Activated CD4-positive, alpha-beta memory T cell treated with anti-CD3 and anti-CD28 coated beads for 36 hours (primary cell): ENCODE measurements at regions of chr12 and their contacts with region 1.

Region 1: GRCh38 chr12:68497702-68498101 is 113.0 kb upstream of the RAP1B start:
- DNase-seq: peak; percentile 24
- H3K4me3 Mint-ChIP-seq: peak overlapping the region; percentile 57
- H3K27ac Mint-ChIP-seq: peak overlapping the region; percentile 92
- H3K4me1 Mint-ChIP-seq: peaks cover 29% of the 10 kb centered on the region
- H3K27me3 Mint-ChIP-seq: no peaks in the 10 kb centered on the region

Region 2: DNA sequence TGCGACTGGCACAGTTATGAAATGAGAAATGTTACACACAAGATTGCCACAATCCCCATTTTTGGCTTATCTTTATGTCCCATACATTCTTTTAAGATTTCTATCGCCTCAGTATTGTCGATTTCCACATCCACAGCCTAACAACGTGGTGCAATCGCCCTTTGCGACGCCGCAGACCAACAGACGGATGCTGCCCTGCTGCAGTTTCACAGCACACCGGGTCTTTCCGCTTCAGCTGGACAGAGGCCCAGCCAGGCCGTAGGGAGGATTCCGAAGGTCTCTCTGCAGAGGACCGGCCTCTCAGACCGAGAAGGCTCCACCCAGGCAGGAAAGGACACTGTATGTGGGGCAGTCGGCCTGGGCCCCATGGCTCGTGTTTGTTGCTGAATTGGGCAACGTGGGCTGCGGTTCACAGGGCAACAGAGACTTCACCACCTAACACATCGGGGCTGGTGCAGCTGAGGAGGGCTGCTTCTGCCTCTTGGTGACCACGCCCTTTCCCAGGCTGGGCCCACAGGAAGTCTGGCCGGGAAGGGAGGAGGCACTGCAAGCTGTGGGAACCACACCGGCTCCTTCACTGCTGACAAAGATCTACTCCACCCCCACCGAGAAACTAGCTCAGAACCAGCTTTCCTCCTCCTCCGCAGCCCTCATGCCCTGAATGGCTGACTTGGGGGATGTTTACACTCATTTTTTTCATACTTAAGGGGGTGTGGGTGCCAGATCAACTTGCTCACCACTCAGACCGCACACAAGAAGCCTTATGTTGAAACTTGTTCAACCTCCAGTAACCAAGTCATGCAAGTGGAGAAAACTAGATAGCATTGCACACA is 132.6 kb before region 1 on chr12:
- CTCF ChIA-PET with region 1: interaction called, 4 read pairs
- POLR2A ChIA-PET with region 1: interaction called, 3 read pairs
- intact Hi-C with region 1: loop called (anchors 1 kb)
- DNase-seq: peak; percentile 94
- H3K4me3 Mint-ChIP-seq: peak overlapping the region; percentile 79
- H3K27ac Mint-ChIP-seq: peak overlapping the region; percentile 92
- H3K4me1 Mint-ChIP-seq: peaks cover 53% of the 10 kb centered on the region
- H3K27me3 Mint-ChIP-seq: no peaks in the 10 kb centered on the region

Region 3: GRCh38 chr12:68451261-68452077 is 46.2 kb before region 1 on chr12:
- CTCF ChIA-PET with region 1: no interaction called
- POLR2A ChIA-PET with region 1: interaction called, 10 read pairs
- intact Hi-C with region 1: loop called (anchors 1 kb)
- DNase-seq: peak; percentile 70
- H3K4me3 Mint-ChIP-seq: peak overlapping the region; percentile 33
- H3K27ac Mint-ChIP-seq: peak overlapping the region; percentile 95
- H3K4me1 Mint-ChIP-seq: peaks cover 85% of the 10 kb centered on the region
- H3K27me3 Mint-ChIP-seq: no peaks in the 10 kb centered on the region

Region 4: GRCh38 chr12:68538726-68539614 is 41.3 kb after region 1 on chr12:
- CTCF ChIA-PET with region 1: interaction called, 3 read pairs
- POLR2A ChIA-PET with region 1: interaction called, 7 read pairs
- intact Hi-C with region 1: loop called (anchors 2 kb)
- DNase-seq: peak; percentile 73
- H3K4me3 Mint-ChIP-seq: peak overlapping the region; percentile 12
- H3K27ac Mint-ChIP-seq: peak overlapping the region; percentile 60
- H3K4me1 Mint-ChIP-seq: peaks cover 43% of the 10 kb centered on the region
- H3K27me3 Mint-ChIP-seq: no peaks in the 10 kb centered on the region

Region 5: GRCh38 chr12:68595241-68595640 is 97.5 kb after region 1 on chr12:
- CTCF ChIA-PET with region 1: no interaction called
- POLR2A ChIA-PET with region 1: no interaction called
- intact Hi-C with region 1: no loop called
- DNase-seq: no peak
- H3K4me3 Mint-ChIP-seq: no peak overlapping the region
- H3K27ac Mint-ChIP-seq: peak overlapping the region; percentile 19
- H3K4me1 Mint-ChIP-seq: peaks cover 43% of the 10 kb centered on the region
- H3K27me3 Mint-ChIP-seq: no peaks in the 10 kb centered on the region

Region 6: GRCh38 chr12:68617160-68617926 is 119.6 kb after region 1 on chr12:
- CTCF ChIA-PET with region 1: interaction called, 3 read pairs
- POLR2A ChIA-PET with region 1: interaction called, 10 read pairs
- intact Hi-C with region 1: loop called (anchors 1 kb)
- DNase-seq: no peak
- H3K4me3 Mint-ChIP-seq: no peak overlapping the region
- H3K27ac Mint-ChIP-seq: peak overlapping the region; percentile 67
- H3K4me1 Mint-ChIP-seq: peaks cover 82% of the 10 kb centered on the region
- H3K27me3 Mint-ChIP-seq: no peaks in the 10 kb centered on the region